AG04449 (cell line): ENCODE measurements at regions of chr10 and their contacts with region 1.

Region 1: DNA sequence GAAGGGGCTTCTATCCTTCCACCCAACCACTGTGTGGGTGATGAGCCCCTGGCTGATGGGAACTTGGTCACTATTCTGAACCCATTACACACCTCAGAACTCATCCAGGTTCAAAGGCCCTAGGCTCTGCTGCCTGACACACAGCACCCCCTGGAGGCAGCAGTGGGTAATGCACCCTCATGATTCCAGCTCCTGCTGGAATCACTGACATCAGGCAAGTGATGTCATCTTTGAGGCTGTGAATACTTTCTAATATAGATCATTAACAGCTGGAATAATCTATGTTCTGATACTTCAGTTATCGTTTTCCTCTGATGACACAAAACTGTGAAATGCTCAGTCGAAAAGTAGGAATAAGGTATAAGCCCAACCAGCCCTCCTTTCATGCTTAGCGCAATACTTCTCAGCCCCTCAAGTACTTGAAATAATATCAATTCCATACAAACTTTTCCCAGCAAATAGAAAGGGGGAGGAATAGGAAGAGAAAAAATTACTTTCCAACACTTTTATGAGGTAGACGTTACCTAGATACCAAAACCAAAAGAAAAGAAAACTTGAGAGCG is 7.5 kb upstream of the RBP3 start:
- DNase-seq: no peak
- H3K4me3 ChIP-seq: no peak overlapping the region
- CTCF ChIP-seq: peak; percentile 90

Region 2: DNA sequence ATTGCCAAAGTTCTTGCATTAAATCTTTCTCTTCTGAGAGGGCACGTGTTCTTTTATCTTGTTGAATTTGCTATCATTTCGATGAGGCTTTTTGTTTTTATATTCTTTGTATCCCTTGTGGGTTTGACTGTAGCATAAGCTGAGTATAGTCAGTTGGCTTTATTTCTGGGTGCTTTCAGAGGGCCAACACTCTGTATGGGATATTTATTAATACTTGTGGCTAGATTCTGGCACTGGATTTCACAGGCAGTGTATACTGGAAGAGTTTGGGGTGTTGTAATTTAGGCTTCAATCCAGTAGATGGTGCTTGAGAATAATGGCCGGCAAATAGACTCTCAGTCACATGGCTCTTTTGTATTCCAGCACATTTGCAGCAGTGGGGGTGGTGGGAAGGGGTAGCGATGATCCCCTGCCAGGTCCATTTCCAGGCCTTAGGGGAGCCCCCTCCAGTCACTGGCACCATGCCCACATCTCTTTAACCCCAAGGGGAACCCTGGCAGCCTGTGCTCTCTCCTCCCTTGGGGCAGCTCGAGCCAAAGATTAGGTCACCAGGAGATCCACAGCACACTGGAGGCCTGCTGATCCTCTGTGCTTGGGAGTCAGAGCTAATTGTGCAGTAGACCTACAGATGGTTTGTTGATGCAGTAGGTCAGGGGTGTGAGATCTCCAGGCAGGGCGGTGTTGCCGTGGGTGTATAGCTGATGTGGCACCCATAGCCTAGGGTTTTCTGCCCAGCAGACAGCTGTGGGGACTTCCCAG is 347.7 kb before region 1 on chr10:
- CTCF ChIA-PET with region 1: interaction called, 25 read pairs
- POLR2A ChIA-PET with region 1: no interaction called
- DNase-seq: no peak
- H3K4me3 ChIP-seq: no peak overlapping the region
- CTCF ChIP-seq: peak; percentile 41

Region 3: DNA sequence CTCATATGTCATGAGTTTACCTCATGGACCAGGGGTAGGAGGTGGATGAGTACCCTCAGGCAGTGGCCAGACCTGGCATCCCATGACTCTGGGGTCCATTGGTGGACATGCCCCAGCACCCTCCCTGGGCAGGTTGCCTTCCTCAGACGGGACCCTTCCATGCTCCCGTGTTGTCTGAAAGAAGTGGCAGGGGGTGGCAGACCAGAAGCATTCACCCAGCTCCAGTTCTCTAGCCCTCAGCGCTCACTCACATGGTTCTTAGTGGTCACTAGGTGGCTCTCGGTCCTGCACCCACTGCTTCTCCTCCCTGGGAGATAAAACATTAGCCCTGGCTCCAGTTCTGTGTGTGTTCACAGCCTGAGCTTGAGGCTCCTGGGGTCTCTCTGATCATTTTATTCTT is 13.5 kb after region 1 on chr10:
- CTCF ChIA-PET with region 1: interaction called, 12 read pairs
- POLR2A ChIA-PET with region 1: no interaction called
- DNase-seq: no peak
- H3K4me3 ChIP-seq: no peak overlapping the region
- CTCF ChIP-seq: peak; percentile 28

Region 4: DNA sequence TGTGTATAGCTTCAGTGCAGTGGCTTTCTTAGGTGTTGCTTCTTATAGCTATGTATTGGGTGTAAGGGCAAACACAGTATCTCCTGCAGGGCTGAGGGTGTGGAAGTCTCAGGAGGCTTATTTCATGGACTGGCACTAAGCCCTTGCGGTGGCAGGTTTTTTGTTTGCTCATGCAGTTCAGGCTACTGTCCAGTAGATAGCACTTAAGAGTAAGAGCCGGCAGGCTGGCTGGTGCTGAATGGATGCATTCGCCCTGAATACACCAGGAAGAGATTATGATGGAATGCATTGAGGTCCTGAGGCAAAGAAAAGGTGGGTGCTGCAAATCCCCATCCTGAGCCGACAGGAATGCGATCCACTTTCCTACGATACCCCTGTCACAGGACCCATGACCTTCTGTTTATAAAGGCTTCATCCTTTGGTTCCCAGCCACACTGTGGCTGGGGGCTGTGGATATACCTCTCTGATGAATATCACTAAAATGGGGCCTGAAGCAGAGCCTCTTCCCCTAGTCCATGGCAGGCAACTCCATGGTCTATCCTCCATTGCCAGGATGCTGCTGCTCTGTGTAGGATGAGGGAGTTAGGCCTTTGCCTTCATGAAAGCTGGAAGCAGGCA is 98.3 kb after region 1 on chr10:
- CTCF ChIA-PET with region 1: no interaction called
- POLR2A ChIA-PET with region 1: no interaction called
- DNase-seq: peak; percentile 23
- H3K4me3 ChIP-seq: no peak overlapping the region
- CTCF ChIP-seq: peak; percentile 63